ENCODE measurements at regions of chr19 and their contacts with region 1.

Region 1: GRCh38 chr19:49631014-49631588 is 8.8 kb downstream of the RRAS start:
- DNase-seq: no peak
- H3K4me3 ChIP-seq: no peak overlapping the region
- H3K4me3 Mint-ChIP-seq: no peak overlapping the region
- H3K27ac ChIP-seq: no peak overlapping the region
- H3K27ac Mint-ChIP-seq: peak overlapping the region in 4 of 7 donors; percentile 2 to 78 (median 32)
- H3K4me1 ChIP-seq: no peaks in the 10 kb centered on the region
- H3K4me1 Mint-ChIP-seq: peaks cover 2 to 9% (median 4%) of the 10 kb centered on the region in 4 donors
- H3K27me3 ChIP-seq: no peaks in the 10 kb centered on the region
- H3K27me3 Mint-ChIP-seq: no peaks in the 10 kb centered on the region

Region 2: DNA sequence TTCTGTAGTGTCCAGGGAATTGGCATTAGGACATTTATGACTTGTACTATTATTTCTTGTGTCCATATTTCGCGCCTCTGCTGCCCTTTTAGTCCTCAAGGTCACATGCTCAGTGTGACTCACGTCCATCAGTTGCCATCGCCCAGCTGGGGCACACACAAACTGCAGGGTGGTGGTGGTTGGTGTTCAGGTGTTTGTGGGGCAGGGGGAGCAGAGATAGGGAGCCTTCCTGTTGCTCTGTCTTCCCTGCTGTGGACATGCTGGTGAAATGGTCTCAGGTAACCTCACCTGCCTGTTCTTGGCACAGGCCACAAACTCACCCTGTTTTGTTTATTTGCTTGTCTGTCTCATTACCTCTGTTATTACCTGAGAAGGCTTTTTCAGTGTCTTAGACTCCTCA is 17.7 kb before region 1 on chr19:
- CTCF ChIA-PET with region 1: no interaction called
- POLR2A ChIA-PET with region 1: no interaction called
- intact Hi-C with region 1: loop called (anchors 2 kb)
- DNase-seq: no peak
- H3K4me3 ChIP-seq: no peak overlapping the region
- H3K4me3 Mint-ChIP-seq: no peak overlapping the region
- H3K27ac ChIP-seq: no peak overlapping the region
- H3K27ac Mint-ChIP-seq: peak overlapping the region in 3 of 7 donors; percentile 8 to 91 (median 52)
- H3K4me1 ChIP-seq: peaks cover 5% of the 10 kb centered on the region
- H3K4me1 Mint-ChIP-seq: peaks cover 3 to 17% (median 10%) of the 10 kb centered on the region in 4 donors
- H3K27me3 ChIP-seq: no peaks in the 10 kb centered on the region
- H3K27me3 Mint-ChIP-seq: no peaks in the 10 kb centered on the region

Measured in CD4-positive, alpha-beta memory T cell (primary cell).